Posterior vena cava (tissue), 2 donors: ENCODE measurements at regions of chr6 and their contacts with region 1.

Region 1: GRCh38 chr6:143689848-143690247 is 12.1 kb downstream of the PHACTR2 start:
- DNase-seq: no peak

Region 2: GRCh38 chr6:143478479-143479062 is 211.3 kb before region 1 on chr6:
- intact Hi-C with region 1: no loop called
- DNase-seq: no peak

Region 3: DNA sequence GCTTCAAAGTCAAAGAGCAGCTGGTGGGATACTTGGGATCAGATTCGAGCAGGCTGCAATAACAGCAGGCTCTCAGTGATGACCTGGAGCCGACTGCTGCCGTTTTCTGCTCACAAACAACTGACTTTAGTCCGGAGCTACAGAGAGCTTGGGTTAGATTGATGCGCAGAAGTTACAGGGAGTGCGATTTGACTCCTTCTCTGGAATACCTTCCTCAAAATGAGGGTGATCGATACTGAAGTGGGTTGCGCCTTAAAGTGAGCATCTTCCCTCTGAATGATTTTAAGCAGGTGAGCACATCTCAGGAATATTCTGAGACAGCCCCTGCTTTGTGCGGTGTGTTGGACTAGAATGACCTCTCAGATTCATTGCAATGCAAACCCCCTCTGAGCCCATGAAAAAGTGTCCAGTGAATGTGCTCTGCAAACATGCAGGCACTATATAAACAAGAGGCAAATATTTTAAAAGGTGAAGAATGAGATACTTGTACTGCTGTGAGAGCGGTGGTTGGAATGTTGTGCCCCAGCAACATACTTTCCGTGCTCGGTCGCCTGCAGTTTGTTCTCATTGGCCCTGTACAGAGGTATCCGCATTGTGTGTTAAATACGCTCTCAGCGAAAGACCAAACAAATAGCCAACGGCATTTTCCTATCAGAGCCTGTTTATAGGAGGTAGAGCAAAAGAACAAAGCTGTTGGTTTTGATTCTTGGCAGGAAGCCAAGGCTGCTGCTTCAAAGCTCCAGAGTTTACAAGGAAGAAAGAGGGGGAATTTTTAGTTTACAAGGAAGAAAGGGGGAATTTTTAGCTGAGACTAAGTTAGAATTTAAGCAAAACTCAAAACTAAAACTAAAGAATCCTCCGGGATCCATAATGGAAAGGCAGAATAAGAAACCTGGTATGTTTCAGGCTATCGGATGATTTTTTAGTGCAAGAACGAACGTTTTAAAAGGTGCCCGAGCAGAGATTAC is 55.6 kb after region 1 on chr6:
- intact Hi-C with region 1: loop called in 1 of 2 experiments (anchors 10 kb)
- DNase-seq: no peak